GM10248 (cell line): ENCODE measurements at regions of chr3 and their contacts with region 1.

Region 1: GRCh38 chr3:56801662-56802377 is at the start of gene ARHGEF3:
- DNase-seq: peak; percentile 93
- CTCF ChIP-seq: peak; percentile 51

Region 2: GRCh38 chr3:56711344-56711743 is 90.5 kb before region 1 on chr3:
- CTCF ChIA-PET with region 1: interaction called, 11 read pairs
- POLR2A ChIA-PET with region 1: no interaction called
- DNase-seq: peak; percentile 24
- CTCF ChIP-seq: no peak

Region 3: GRCh38 chr3:56758539-56758981 is 43.3 kb before region 1 on chr3:
- CTCF ChIA-PET with region 1: interaction called, 73 read pairs
- POLR2A ChIA-PET with region 1: interaction called, 3 read pairs
- DNase-seq: peak; percentile 69
- CTCF ChIP-seq: no peak

Region 4: DNA sequence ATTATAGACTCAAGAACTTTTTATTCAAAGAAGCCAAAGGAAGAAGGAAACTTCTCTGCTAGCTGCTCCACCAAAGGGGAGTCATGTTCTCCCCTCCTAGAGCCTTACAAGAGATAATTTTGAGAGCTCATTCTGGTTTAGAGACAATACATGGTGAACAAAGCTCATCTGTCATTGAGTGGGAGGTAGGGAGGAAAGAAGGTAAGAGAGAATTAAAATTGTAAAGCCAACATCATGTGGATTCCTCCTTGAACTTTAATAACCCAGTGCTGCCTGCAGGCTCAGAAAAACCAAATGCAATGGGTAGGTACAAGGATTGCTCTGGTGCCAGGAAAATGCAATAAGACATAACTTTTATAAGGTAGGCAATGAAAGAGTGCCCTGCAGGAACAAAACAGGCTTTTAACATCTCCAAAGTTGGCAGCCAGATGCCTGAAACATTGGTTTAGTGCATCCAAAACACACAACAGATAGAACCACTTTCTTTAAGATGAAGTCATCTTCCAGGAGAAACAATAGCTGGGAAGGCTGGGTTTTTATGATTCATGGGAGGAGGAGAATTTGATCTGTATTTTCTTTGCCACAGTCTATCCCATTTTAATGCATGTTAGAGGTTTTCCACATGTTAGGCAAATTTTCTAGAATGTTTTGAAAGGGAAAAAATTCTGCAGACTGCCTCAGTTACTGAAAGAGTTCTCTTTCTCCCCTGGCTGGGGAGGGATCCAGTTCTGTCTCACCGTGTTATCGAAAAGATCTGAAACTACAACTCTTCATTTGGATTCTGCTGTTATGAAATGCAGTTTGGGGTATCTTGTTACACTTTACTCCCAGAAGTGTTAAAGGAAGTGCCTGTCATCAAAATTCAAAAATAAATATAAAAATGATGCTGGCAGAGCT is 11.2 kb after region 1 on chr3:
- CTCF ChIA-PET with region 1: interaction called, 176 read pairs
- POLR2A ChIA-PET with region 1: no interaction called
- DNase-seq: no peak
- CTCF ChIP-seq: no peak

Region 5: GRCh38 chr3:56960234-56960917 is 158.6 kb after region 1 on chr3:
- CTCF ChIA-PET with region 1: interaction called, 10 read pairs
- POLR2A ChIA-PET with region 1: no interaction called
- DNase-seq: peak; percentile 58
- CTCF ChIP-seq: no peak